A673 (cell line): ENCODE measurements at regions of chr1 and their contacts with region 1.

Region 1: DNA sequence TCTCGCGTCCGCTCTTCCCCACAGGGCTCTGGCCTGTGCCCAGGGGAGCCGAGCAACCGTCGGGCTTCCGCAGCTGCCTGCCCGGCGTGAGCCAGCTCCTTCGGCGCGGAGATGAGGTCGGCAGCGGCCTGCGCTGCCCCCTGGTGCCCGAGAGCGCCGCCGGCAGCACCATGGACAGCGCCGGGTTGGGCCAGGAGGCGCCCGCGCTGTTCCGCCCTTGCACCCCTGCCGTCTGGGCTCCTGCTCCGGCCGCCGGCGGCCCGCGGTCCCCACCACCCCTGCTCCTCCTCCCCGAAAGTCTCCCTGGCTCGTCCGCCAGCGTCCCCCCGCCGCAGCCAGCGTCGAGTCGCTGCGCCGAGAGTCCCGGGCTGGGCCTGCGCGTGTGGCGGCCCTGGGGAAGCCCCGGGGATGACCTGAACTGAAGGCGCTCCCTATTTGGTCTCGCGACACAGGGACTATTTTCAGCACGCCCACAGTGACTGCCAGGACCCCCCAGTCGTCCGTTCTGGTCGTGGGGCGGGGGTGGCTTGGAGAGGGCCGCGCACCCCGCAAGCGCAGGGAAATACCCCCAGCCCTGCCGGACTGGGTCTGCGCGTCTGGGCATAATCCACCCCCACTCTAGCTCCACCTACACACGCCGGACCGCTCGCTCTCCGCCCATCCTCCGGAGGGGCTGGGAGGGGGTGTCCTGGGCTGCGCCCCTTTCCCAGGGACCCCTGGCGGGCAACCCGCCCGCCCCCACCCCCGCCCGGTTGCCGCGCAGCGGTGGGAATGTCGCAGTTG is 1.3 kb downstream of the HES3 start:
- DNase-seq: peak; percentile 88
- H3K4me3 ChIP-seq: peak overlapping the region; percentile 46
- H3K27ac ChIP-seq: no peak overlapping the region
- H3K4me1 ChIP-seq: peaks cover 26% of the 10 kb centered on the region
- H3K27me3 ChIP-seq: peaks cover 56% of the 10 kb centered on the region
- CTCF ChIP-seq: peak; percentile 79

Region 2: DNA sequence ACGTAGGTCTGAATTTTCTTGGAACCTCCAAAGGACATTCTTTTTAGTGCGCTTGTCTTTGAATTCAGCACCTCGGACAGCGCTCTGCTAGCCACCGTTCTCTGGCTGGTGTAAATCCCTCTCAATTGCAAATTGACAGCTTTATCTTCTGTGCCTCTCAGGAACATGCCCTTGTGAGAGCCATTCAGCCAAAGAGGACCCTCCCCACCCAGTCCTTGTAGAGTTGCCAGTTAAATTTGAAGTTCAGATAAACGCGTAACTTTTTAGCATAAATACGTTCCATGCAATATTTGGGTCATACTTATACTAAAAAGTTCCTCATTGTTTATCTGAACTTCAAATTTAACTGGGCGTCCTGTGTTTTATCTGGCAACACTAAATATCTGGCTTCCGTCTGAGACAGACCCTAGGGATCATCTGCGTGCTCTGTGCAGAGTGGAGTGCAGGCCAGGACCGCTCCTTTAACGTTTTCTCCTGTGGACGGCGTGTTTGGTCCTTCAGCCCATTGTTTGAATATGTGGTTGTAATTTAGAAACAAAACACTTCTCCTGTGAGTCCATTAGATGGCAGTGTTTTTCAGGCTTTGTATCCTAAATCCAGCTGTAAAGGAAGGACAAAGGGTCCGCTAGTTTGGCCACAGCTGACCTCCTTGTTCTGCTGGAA is 192.6 kb before region 1 on chr1:
- CTCF ChIA-PET with region 1: interaction called, 23 read pairs
- POLR2A ChIA-PET with region 1: no interaction called
- intact Hi-C with region 1: loop called (anchors 1 kb)
- DNase-seq: peak; percentile 77
- H3K4me3 ChIP-seq: no peak overlapping the region
- H3K27ac ChIP-seq: no peak overlapping the region
- H3K4me1 ChIP-seq: no peaks in the 10 kb centered on the region
- H3K27me3 ChIP-seq: no peaks in the 10 kb centered on the region
- CTCF ChIP-seq: peak; percentile 69

Region 3: DNA sequence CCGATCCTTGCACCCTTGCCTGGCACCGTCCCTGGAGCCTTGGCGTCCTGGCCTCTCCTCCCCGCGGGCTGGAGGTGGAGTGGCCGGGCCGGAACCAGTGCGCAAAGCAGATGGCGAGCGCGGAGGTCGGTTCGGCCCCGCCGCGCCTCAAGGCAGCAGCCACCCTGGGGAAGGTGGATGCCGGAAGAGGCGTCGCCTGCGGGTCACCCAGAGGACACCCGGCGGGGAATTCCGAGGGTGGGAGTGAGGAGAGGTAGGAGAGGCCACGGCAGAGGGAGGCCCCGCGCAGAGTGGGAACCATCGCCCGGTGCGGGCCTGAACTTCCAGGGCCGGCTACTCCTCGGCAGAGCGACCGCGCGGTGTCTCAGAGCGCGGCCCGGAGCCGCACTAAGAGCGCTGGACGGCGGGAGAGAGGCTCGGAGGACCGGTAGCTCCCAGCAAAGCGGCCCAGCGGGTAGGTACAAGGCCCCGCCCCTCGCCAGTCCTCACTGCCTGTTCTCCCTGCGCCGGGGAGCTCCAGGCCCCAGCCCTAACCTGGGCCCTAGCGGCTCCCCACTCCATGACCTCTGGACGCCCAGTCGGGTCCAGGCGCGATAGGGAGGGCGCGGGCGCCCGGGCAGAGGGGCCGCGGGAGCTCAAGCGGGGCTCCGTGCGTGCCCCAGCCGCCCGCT is 39.3 kb before region 1 on chr1 and contains the start of gene RNF207:
- CTCF ChIA-PET with region 1: interaction called, 13 read pairs
- POLR2A ChIA-PET with region 1: no interaction called
- intact Hi-C with region 1: no loop called
- DNase-seq: peak; percentile 61
- H3K4me3 ChIP-seq: peak within 1 kb of the TSS; percentile 44
- H3K27ac ChIP-seq: no peak within 1 kb of the TSS
- H3K4me1 ChIP-seq: peaks cover 21% of the 10 kb centered on the region
- H3K27me3 ChIP-seq: no peaks in the 10 kb centered on the region
- CTCF ChIP-seq: no peak
- total RNA-seq, gene RNF207: 6.4 and 12.5 TPM in 2 replicates

Region 4: GRCh38 chr1:6396998-6397397 is 151.7 kb after region 1 on chr1:
- CTCF ChIA-PET with region 1: interaction called, 11 read pairs
- POLR2A ChIA-PET with region 1: no interaction called
- intact Hi-C with region 1: no loop called
- DNase-seq: no peak
- H3K4me3 ChIP-seq: no peak overlapping the region
- H3K27ac ChIP-seq: no peak overlapping the region
- H3K4me1 ChIP-seq: peaks cover 13% of the 10 kb centered on the region
- H3K27me3 ChIP-seq: no peaks in the 10 kb centered on the region
- CTCF ChIP-seq: 0 out of 2 replicates have a peak, but pooled peaks have one; percentile 25

Region 5: DNA sequence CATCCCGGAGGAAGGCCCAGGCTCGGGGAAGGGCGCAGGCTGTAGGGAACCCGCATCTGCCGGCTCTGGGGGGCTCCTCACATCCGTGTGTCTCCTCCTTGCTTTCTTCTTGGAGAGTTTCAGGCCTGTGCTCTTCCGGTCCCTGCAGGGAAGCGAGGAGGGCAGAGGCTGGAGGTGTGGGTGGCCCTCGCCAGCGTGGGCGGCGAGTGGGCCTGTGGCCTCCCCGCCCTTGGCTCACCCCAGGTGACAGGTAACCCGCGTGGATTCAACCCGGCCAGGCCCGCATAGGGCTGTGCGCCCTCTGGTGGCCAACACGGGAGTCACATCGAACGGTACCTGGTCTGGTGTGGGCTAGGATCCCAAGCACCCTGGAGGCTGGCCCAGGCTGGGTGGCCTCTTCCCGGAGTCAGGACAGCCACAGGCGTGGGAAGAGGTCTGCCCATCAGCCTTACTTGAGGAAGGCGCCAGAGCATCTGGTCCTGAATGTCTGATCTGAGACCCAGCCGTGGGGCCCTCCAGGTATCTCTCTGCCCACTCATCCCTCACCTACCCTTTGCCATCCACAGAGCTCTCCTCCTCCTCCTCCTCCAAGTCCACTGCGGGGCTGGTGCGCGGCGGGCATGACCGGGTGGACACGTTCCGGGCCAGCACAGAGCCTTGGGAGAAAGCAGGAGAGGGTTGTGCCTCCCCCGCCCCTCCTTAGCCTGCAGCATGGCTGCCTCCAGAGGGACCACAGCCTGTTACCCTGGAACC is 230.3 kb after region 1 on chr1:
- CTCF ChIA-PET with region 1: interaction called, 4 read pairs
- POLR2A ChIA-PET with region 1: no interaction called
- intact Hi-C with region 1: loop called (anchors 2 kb)
- DNase-seq: peak; percentile 43
- H3K4me3 ChIP-seq: no peak overlapping the region
- H3K27ac ChIP-seq: no peak overlapping the region
- H3K4me1 ChIP-seq: no peaks in the 10 kb centered on the region
- H3K27me3 ChIP-seq: no peaks in the 10 kb centered on the region
- CTCF ChIP-seq: peak; percentile 97

Region 6: GRCh38 chr1:6509919-6510291 is 264.6 kb after region 1 on chr1:
- CTCF ChIA-PET with region 1: no interaction called
- POLR2A ChIA-PET with region 1: no interaction called
- intact Hi-C with region 1: no loop called
- DNase-seq: no peak
- H3K4me3 ChIP-seq: no peak overlapping the region
- H3K27ac ChIP-seq: no peak overlapping the region
- H3K4me1 ChIP-seq: no peaks in the 10 kb centered on the region
- H3K27me3 ChIP-seq: no peaks in the 10 kb centered on the region
- CTCF ChIP-seq: no peak